ENCODE measurements at regions of chr4 and their contacts with region 1.

Region 1: DNA sequence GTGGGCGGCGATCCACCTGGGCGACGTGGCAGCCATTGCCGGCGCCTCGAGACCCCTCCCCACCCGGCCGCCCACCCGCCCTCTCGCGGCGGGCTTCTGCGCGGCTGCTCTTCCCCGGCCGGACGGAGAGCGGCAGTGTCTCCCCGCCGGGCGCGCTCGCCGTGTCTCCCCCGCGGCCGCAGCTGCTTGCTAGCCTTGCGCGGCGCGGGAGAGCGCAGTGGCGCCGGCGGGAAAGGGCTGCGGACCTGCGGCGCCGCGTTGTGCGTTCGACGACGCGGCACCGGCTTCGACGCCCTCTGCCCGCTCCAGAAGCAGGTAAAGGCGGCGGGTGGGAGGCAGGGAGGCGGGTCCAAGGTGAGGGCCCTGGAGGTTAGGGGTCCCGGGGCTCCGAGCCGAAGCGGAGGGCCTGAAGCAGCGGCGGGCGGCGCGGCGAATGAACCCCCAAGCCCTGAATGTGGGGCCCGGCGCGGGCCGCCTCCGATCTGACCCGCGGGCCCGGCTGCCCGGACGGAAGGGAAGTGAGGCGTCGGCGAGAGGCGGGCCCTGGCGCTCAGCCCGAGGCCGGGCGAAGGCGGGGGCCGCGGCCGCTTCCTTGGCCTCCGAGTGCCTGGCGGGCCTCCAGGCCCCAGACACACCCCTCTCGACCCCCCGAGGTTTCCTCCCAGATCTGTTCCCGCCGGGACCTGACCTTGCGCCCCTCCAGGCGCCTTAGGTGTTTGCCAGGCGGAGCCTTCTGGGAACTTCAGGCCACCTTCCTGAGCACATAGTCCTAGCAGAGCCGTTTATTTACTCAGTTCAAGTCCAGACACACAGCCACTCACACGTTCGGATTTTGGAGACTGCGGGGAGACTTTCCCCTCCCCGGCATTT is at the start of gene N4BP2:
- DNase-seq: peak; percentile 96
- H3K4me3 Mint-ChIP-seq: peak within 1 kb of the TSS; percentile 78
- H3K27ac Mint-ChIP-seq: peak within 1 kb of the TSS; percentile 93
- H3K4me1 Mint-ChIP-seq: peaks cover 11% of the 10 kb centered on the region
- H3K27me3 Mint-ChIP-seq: no peaks in the 10 kb centered on the region
- CTCF ChIP-seq: peak; percentile 93
- total RNA-seq, gene N4BP2: 8.3 and 8.8 TPM in 2 replicates

Region 2: DNA sequence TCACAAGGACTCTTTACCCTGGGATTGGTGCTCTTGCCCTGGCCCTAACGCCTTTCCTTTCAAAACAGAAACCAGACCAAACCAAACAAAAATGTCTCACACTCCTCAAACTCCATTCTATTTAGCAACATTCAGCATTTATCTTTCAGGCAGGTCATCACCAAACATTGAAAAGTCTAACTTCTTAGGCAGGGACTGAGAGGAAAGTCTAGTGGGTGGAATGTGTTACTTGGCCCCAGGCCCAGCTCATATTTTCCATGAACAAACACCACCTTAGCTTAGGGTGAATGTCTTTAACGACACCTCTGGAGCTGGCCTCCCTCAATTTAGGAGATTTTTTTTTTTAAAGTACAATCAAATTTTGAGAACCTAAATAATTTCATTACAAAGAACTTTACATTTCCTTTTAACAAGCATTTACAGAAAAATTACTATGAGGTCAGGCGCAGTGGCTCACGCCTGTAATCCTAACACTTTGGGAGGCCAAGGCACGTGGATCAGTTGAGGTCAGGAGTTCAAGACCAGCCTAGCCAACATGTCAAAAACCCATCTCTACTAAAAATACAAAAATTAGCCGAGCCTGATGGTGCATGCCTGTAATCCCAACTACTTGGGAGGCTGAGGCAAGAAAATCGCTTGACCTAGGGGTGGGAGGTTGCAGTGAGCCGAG is 10.5 kb before region 1 on chr4:
- CTCF ChIA-PET with region 1: interaction called, 8 read pairs
- POLR2A ChIA-PET with region 1: interaction called, 18 read pairs
- intact Hi-C with region 1: no loop called
- DNase-seq: peak; percentile 72
- H3K4me3 Mint-ChIP-seq: peak overlapping the region; percentile 17
- H3K27ac Mint-ChIP-seq: peak overlapping the region; percentile 76
- H3K4me1 Mint-ChIP-seq: peaks cover 7% of the 10 kb centered on the region
- H3K27me3 Mint-ChIP-seq: no peaks in the 10 kb centered on the region
- CTCF ChIP-seq: no peak

Region 3: DNA sequence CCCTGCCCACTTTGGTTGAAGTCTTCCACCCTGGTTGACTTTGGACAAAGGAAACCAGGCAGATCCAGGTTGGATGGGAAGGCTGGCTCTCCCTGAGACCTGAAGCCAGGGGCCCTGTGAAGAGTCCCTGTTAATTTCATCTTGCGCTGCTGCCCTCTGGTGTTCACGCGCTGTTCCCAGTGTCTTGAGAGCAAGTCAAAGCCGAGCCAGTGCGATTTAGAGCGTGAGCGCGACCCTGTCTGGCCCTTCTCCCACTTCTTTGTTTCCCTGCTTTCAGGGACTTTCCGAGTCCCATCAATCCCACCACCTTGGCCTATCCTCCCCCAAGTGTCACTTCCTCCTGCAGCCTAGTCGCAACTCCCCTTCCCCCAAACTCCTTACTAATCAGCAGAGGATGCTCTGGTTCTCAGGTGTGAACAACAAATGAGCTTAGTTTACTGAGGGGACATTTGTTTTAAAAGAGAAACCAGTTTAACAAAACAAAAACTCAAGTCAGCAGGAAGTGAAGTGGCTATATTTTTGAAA is 252.4 kb after region 1 on chr4:
- CTCF ChIA-PET with region 1: interaction called, 5 read pairs
- POLR2A ChIA-PET with region 1: interaction called, 5 read pairs
- intact Hi-C with region 1: loop called (anchors 2 kb)
- DNase-seq: peak; percentile 90
- H3K4me3 Mint-ChIP-seq: no peak overlapping the region
- H3K27ac Mint-ChIP-seq: no peak overlapping the region
- H3K4me1 Mint-ChIP-seq: peaks cover 25% of the 10 kb centered on the region
- H3K27me3 Mint-ChIP-seq: no peaks in the 10 kb centered on the region
- CTCF ChIP-seq: peak; percentile 81

Region 4: DNA sequence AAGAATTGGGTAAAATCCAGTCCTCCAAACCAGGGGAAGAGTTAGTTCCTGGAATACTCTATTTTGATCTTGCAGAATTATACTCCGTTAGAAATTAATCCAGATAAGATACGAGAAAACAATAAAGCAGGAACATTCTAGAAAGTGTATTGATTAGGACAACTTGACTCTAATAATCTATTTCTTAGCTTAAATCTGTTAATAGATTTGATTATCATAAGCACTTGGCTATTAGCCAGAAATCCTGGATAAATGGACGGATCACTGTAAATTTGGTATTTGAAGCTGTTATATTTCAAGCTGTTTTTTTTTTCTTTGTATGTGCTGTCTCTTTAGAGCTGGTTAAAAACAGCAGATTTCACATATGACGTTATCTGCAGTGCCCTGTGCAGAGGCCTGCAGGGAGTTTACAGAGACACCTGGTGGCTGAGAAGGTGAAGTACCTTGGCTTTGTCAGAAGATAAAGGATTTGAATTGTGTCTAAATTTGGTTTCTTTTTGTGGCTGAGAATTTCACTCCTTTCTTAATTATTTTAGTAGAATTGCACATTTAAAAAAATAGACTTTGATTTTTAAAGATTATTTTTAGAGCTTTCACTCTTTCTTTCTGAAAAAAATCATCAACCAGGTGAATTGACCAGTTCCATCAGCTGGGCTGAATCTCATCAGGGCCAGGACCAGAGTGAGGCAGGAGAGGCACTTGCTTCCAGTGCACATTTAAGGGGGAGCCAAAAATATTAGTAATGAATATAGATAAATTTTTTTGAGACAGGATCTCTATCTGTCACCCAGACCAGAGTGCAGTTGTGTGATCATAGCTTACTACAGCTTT is 268.5 kb after region 1 on chr4:
- CTCF ChIA-PET with region 1: interaction called, 3 read pairs
- POLR2A ChIA-PET with region 1: interaction called, 18 read pairs
- intact Hi-C with region 1: loop called (anchors 1 kb)
- DNase-seq: peak; percentile 72
- H3K4me3 Mint-ChIP-seq: no peak overlapping the region
- H3K27ac Mint-ChIP-seq: no peak overlapping the region
- H3K4me1 Mint-ChIP-seq: peaks cover 26% of the 10 kb centered on the region
- H3K27me3 Mint-ChIP-seq: no peaks in the 10 kb centered on the region
- CTCF ChIP-seq: peak; percentile 80